HEK293 (cell line): ENCODE measurements at regions of chr12 and their contacts with region 1.

Region 1: GRCh38 chr12:11202811-11203210 is 16.1 kb upstream of the TAS2R42 start:
- H3K4me3 ChIP-seq: no peak overlapping the region
- H3K27ac ChIP-seq: no peak overlapping the region
- H3K4me1 ChIP-seq: no peaks in the 10 kb centered on the region
- CTCF ChIP-seq: no peak

Region 2: GRCh38 chr12:10771132-10771733 is 431.6 kb before region 1 on chr12:
- CTCF ChIA-PET with region 1: interaction called, 71 read pairs
- POLR2A ChIA-PET with region 1: interaction called, 3 read pairs
- H3K4me3 ChIP-seq: no peak overlapping the region
- H3K27ac ChIP-seq: no peak overlapping the region
- H3K4me1 ChIP-seq: no peaks in the 10 kb centered on the region
- CTCF ChIP-seq: 0 out of 2 replicates have a peak, but pooled peaks have one; percentile 36

Region 3: GRCh38 chr12:10779103-10779502 is 423.7 kb before region 1 on chr12:
- CTCF ChIA-PET with region 1: interaction called, 71 read pairs
- POLR2A ChIA-PET with region 1: no interaction called
- H3K4me3 ChIP-seq: no peak overlapping the region
- H3K27ac ChIP-seq: no peak overlapping the region
- H3K4me1 ChIP-seq: no peaks in the 10 kb centered on the region
- CTCF ChIP-seq: no peak